BJ (cell line): ENCODE measurements at regions of chrX and their contacts with region 1.

Region 1: DNA sequence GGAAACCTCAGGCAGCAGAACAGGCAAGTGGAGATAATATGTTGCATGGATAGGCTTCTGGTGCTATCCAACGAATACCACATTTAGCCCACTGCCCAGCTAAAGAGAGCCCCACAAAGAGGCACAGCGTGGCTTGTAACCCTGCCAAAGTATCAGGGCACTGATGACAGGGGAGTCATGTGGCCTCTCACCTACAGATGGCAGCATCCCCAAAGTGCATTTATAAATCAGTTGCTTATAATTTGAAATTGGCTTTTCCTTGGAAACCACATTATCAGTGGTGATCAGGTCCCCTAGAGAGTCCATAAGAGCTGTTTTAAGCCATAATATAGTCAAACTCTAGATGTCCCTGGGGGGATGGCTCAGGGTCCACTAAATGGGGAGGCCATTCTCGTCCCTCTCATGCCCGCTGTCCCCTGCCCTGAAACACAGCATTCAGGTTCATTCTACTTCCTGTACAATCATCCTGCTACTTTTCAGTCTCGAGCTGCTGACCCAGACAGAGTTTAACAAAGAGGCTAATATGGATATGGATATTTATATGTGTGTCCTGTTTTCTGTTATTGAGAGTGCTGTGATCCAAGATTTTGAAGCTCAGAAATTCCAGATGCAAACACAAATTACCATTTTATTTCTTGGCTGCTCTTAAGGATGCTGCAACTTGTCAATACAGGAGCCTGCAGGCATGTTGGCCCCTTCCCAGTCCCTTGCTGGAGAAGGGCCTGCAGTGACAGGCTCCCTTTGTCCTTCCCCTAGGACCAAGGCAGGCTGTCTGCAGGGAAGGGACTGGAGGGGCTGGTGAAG is 28.5 kb downstream of the SRPX start:
- DNase-seq: no peak
- H3K4me3 ChIP-seq: no peak overlapping the region
- H3K27me3 ChIP-seq: no peaks in the 10 kb centered on the region
- CTCF ChIP-seq: peak; percentile 51

Region 2: GRCh38 chrX:38086451-38087215 is 105.6 kb before region 1 on chrX:
- CTCF ChIA-PET with region 1: no interaction called
- POLR2A ChIA-PET with region 1: no interaction called
- DNase-seq: no peak
- H3K4me3 ChIP-seq: no peak overlapping the region
- H3K27me3 ChIP-seq: no peaks in the 10 kb centered on the region
- CTCF ChIP-seq: no peak

Region 3: GRCh38 chrX:38282044-38282443 is 89.8 kb after region 1 on chrX:
- CTCF ChIA-PET with region 1: interaction called, 28 read pairs
- POLR2A ChIA-PET with region 1: no interaction called
- DNase-seq: no peak
- H3K4me3 ChIP-seq: no peak overlapping the region
- H3K27me3 ChIP-seq: no peaks in the 10 kb centered on the region
- CTCF ChIP-seq: peak; percentile 52